ENCODE measurements at regions of chr5 and their contacts with region 1.

Region 1: DNA sequence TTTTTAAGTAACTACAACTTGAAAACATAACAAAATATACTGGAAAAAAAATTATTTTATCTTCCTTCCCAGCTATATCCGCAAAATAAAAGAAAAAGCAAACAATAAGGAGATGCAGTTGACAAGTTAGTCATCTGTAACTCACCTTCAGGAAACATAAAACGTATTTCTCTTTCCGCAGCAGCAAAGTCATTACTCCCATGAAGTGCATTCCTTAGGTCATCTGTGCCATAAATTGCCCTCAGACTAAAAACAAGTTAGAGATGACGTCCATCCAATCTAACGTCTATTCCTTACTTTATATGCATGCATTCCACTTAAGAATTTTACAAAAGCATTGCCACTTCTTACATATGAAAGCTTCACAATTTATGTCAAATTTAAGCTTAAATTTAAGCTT is 10.9 kb downstream of the NME5 start:
- DNase-seq: no peak
- ATAC-seq: no peak
- H3K4me3 ChIP-seq: no peak overlapping the region
- H3K27ac ChIP-seq: no peak overlapping the region
- H3K4me1 ChIP-seq: peaks cover 4 to 6% of the 10 kb centered on the region in 2 experiments; a peak in 3 of 4 replicates
- H3K27me3 ChIP-seq: no peaks in the 10 kb centered on the region
- CTCF ChIP-seq: no peak
- POLR2A ChIP-seq: no peak
- RAD21 ChIP-seq: no peak

Region 2: GRCh38 chr5:137320056-137321045 is 808.0 kb before region 1 on chr5:
- CTCF ChIA-PET with region 1: interaction called, 5 read pairs
- POLR2A ChIA-PET with region 1: no interaction called
- RAD21 ChIA-PET with region 1: no interaction called
- intact Hi-C with region 1: loop called (anchors 5 kb)
- DNase-seq: peak; percentile 21
- ATAC-seq: peak; percentile 59
- H3K4me3 ChIP-seq: no peak overlapping the region
- H3K27ac ChIP-seq: no peak overlapping the region
- H3K4me1 ChIP-seq: no peaks in the 10 kb centered on the region
- H3K27me3 ChIP-seq: peaks cover 69% of the 10 kb centered on the region
- CTCF ChIP-seq: peak; percentile 63 to 77 (median 69); a peak in 5 of 6 replicates
- POLR2A ChIP-seq: no peak
- RAD21 ChIP-seq: peak; percentile 65

Region 3: DNA sequence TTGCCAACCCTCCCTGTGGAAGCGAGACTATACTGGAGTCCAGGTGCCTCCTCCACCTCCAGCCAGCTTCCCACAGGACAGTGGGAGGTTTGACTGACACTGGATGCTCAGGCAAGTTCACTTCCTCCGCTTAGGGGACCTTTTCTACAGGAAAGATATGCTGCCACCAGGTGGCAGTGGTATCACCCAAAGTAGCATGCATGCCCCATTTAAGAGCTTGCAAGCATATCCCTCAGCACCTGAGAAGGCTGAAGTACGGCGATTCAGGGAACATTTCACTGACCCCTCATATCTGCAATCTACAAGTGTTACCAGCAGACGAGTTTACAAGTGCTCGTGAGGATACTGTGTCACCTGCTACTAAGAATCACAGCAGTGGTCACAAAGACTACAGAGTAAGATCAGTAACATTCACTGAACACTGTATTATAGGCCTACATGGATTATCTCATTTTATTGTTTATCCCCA is 468.0 kb before region 1 on chr5:
- CTCF ChIA-PET with region 1: interaction called, 12 read pairs
- POLR2A ChIA-PET with region 1: no interaction called
- RAD21 ChIA-PET with region 1: interaction called, 3 to 4 read pairs
- intact Hi-C with region 1: loop called (anchors 1 kb)
- DNase-seq: peak; percentile 86
- ATAC-seq: peak; percentile 99
- H3K4me3 ChIP-seq: no peak overlapping the region
- H3K27ac ChIP-seq: no peak overlapping the region
- H3K4me1 ChIP-seq: peaks cover 0 to 9% of the 10 kb centered on the region in 2 experiments; a peak in 1 of 4 replicates
- H3K27me3 ChIP-seq: 0 out of 2 replicates have a peak, but pooled peaks cover 5% of the 10 kb centered on the region
- CTCF ChIP-seq: peak; percentile 80 to 87 (median 84)
- POLR2A ChIP-seq: no peak
- RAD21 ChIP-seq: peak; percentile 76

Region 4: DNA sequence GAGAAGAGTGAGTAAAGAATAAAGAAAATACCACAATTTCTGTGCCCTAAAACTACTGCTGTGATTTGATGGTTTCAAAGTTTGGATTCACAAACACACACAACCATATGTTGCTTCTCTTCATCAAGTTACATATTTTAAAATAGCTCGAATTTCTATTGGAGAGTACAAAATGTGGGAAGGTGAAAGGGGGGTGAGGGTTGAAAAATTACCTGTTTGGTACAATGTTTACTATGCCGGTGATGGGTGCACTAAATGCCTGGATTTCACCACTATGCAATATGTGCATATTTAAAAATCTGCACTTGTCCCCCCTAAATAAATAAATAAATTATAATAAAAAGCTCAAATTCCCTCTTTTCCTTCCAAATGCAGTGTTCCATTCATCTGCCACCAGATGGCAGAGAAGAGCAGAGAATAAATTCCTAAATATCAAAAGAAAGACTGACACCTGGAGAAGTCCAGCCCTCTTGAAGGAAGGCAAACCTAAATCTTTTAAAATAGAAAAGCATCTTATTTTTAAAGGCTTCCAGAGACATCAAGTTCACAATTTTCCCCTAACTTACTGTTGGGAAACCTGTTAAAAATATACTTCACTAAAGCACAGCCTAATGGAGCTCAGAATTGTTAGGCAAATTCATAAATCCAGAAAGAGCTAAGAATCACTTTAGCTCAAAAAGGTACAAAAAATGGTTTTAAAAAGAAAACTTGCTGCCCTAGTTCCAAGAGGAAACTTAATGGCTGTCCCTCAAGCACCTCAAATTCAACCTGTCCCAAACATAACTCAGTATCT is 349.4 kb before region 1 on chr5:
- CTCF ChIA-PET with region 1: interaction called, 28 read pairs
- POLR2A ChIA-PET with region 1: interaction called, 4 read pairs
- RAD21 ChIA-PET with region 1: interaction called in 1 of 2 experiments, 7 read pairs
- intact Hi-C with region 1: loop called (anchors 2 kb)
- DNase-seq: peak; percentile 44
- ATAC-seq: peak; percentile 74
- H3K4me3 ChIP-seq: no peak overlapping the region
- H3K27ac ChIP-seq: no peak overlapping the region
- H3K4me1 ChIP-seq: no peaks in the 10 kb centered on the region
- H3K27me3 ChIP-seq: no peaks in the 10 kb centered on the region
- CTCF ChIP-seq: peak; percentile 58 to 91 (median 67)
- POLR2A ChIP-seq: no peak
- RAD21 ChIP-seq: peak; percentile 82

Region 5: DNA sequence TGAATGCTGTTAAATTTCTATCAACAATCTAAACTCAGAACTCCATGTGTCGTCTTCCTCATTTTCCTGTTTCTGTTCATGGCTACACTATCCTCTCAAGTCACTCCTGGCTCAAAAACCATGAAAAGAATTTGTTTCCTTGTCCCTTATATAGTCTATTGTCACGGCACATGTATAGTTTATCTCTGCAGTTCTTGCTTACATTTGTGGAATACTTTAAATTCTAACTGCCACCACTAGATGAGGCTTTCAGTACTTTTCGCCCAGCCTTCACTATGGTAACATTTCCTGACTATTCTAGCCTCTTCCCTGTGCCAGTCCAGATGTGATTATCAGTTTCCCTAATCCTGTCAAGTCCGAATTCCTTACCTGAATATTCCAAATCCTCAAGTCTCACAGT is 204.5 kb before region 1 on chr5:
- CTCF ChIA-PET with region 1: no interaction called
- POLR2A ChIA-PET with region 1: no interaction called
- RAD21 ChIA-PET with region 1: no interaction called
- intact Hi-C with region 1: no loop called
- DNase-seq: no peak
- ATAC-seq: no peak
- H3K4me3 ChIP-seq: no peak overlapping the region
- H3K27ac ChIP-seq: no peak overlapping the region
- H3K4me1 ChIP-seq: no peaks in the 10 kb centered on the region
- H3K27me3 ChIP-seq: no peaks in the 10 kb centered on the region
- CTCF ChIP-seq: no peak
- POLR2A ChIP-seq: no peak
- RAD21 ChIP-seq: 0 out of 2 replicates have a peak, but pooled peaks have one; percentile 15

Region 6: GRCh38 chr5:138035605-138036537 is 92.5 kb before region 1 on chr5:
- CTCF ChIA-PET with region 1: interaction called, 25 read pairs
- POLR2A ChIA-PET with region 1: interaction called, 4 read pairs
- RAD21 ChIA-PET with region 1: interaction called, 6 to 8 read pairs
- intact Hi-C with region 1: loop called (anchors 1 kb)
- DNase-seq: peak; percentile 90
- ATAC-seq: peak; percentile 72
- H3K4me3 ChIP-seq: no peak overlapping the region
- H3K27ac ChIP-seq: no peak overlapping the region
- H3K4me1 ChIP-seq: peaks cover 12 to 34% of the 10 kb centered on the region in 2 experiments
- H3K27me3 ChIP-seq: no peaks in the 10 kb centered on the region
- CTCF ChIP-seq: peak; percentile 78 to 99 (median 98)
- POLR2A ChIP-seq: no peak
- RAD21 ChIP-seq: peak; percentile 90

Measured in HCT116 (cell line).